Mammary epithelial cell (primary cell): ENCODE measurements at regions of chr9 and their contacts with region 1.

Region 1: DNA sequence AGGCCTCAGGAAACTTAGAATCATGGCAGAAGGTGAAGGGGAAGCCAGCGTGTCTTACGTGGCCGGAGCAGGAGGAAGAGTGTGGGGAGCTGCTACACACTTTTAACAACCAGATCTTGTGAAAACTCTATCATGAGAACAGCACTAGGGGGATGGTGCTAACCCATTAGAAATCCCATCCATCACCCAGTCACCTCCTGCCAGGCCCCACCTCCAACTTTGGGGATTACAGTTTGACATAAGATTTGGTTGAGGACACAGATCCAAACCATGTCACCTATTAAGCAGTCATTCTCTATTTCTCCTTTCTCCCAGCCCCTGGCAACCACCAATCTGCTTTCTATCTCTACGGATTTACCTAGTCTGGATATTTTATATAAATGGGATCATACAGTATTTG is 26.9 kb downstream of the PBX3 start:
- DNase-seq: no peak
- H3K4me3 ChIP-seq: no peak overlapping the region
- H3K27ac ChIP-seq: no peak overlapping the region
- H3K4me1 ChIP-seq: no peaks in the 10 kb centered on the region
- H3K27me3 ChIP-seq: no peaks in the 10 kb centered on the region
- CTCF ChIP-seq: no peak

Region 2: GRCh38 chr9:125739436-125739835 is 34.7 kb before region 1 on chr9:
- CTCF ChIA-PET with region 1: no interaction called
- dilution Hi-C with region 1: no loop called
- in situ Hi-C with region 1: no loop called
- intact Hi-C with region 1: no loop called
- DNase-seq: no peak
- H3K4me3 ChIP-seq: no peak overlapping the region
- H3K27ac ChIP-seq: no peak overlapping the region
- H3K4me1 ChIP-seq: no peaks in the 10 kb centered on the region
- H3K27me3 ChIP-seq: peaks cover 2% of the 10 kb centered on the region
- CTCF ChIP-seq: no peak

Region 3: GRCh38 chr9:125805057-125805456 is 31.0 kb after region 1 on chr9:
- CTCF ChIA-PET with region 1: no interaction called
- dilution Hi-C with region 1: no loop called
- in situ Hi-C with region 1: no loop called
- intact Hi-C with region 1: loop called (anchors 5 kb)
- DNase-seq: no peak
- H3K4me3 ChIP-seq: no peak overlapping the region
- H3K27ac ChIP-seq: no peak overlapping the region
- H3K4me1 ChIP-seq: no peaks in the 10 kb centered on the region
- H3K27me3 ChIP-seq: no peaks in the 10 kb centered on the region
- CTCF ChIP-seq: no peak